Activated T-helper 2 cell treated with anti-CD3 and anti-CD28 coated beads, Interferon-gamma antibody, Interleukin-2, Interleukin-4, amounts not matched to agents 10 μg/mL and 5 μg/mL and 100 μg/mL, durations not matched to agents 14 hours and 24 hours and 36 hours (primary cell): ENCODE measurements at regions of chr16 and their contacts with region 1.

Region 1: GRCh38 chr16:75011634-75012307 is 12.9 kb downstream of the ZNRF1 start:
- DNase-seq: no peak
- H3K4me3 Mint-ChIP-seq: peak overlapping the region; percentile 66
- H3K27ac Mint-ChIP-seq: peak overlapping the region; percentile 95
- H3K4me1 Mint-ChIP-seq: peaks cover 42% of the 10 kb centered on the region
- H3K27me3 Mint-ChIP-seq: no peaks in the 10 kb centered on the region

Region 2: DNA sequence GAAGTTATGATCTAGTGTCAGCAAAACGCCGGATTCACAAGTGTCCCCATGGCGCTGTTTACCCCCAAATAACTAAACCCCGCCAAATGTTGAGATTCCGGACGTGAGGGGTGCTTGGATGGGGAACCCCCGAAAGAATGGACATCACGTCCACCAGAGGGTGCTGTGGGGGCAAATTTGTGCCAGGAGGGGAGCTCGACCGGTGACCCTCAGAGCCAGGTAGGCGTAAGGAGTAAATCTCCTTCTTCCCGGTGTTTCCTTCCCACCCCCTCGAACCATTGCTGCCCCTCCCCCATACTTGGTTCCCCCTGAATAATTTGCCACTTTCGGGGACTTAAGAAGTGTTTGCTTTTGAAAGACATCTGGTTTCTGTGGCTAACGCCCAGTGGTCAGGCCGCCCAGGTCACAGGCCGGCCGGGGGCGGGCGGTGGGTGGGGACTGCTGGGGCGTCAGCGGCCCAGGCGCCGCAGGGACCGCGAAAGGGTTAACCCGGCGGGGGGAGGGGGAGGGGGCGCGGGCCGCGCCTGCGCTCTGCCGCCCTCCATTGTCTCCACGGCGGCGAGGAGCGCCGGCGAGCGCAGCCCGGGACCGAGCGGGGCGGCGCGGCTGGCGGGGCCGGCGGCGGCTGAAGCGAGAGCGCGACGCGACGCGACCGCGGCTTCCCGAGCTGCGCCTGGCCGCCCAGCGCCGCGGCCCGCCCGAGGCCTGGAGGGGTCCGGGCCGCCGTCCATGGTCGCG is 13.1 kb before region 1 on chr16 and contains the start of gene ZNRF1:
- intact Hi-C with region 1: loop called (anchors 1 kb)
- DNase-seq: peak; percentile 67
- H3K4me3 Mint-ChIP-seq: peak within 1 kb of the TSS; percentile 86
- H3K27ac Mint-ChIP-seq: peak within 1 kb of the TSS; percentile 80
- H3K4me1 Mint-ChIP-seq: peaks cover 39% of the 10 kb centered on the region
- H3K27me3 Mint-ChIP-seq: peaks cover 16% of the 10 kb centered on the region
- total RNA-seq, gene ZNRF1: 34.8 and 36.6 TPM in 2 replicates

Region 3: GRCh38 chr16:75023009-75023408 is 11.2 kb after region 1 on chr16:
- intact Hi-C with region 1: loop called (anchors 1 kb)
- DNase-seq: no peak
- H3K4me3 Mint-ChIP-seq: no peak overlapping the region
- H3K27ac Mint-ChIP-seq: peak overlapping the region; percentile 84
- H3K4me1 Mint-ChIP-seq: peaks cover 23% of the 10 kb centered on the region
- H3K27me3 Mint-ChIP-seq: no peaks in the 10 kb centered on the region

Region 4: DNA sequence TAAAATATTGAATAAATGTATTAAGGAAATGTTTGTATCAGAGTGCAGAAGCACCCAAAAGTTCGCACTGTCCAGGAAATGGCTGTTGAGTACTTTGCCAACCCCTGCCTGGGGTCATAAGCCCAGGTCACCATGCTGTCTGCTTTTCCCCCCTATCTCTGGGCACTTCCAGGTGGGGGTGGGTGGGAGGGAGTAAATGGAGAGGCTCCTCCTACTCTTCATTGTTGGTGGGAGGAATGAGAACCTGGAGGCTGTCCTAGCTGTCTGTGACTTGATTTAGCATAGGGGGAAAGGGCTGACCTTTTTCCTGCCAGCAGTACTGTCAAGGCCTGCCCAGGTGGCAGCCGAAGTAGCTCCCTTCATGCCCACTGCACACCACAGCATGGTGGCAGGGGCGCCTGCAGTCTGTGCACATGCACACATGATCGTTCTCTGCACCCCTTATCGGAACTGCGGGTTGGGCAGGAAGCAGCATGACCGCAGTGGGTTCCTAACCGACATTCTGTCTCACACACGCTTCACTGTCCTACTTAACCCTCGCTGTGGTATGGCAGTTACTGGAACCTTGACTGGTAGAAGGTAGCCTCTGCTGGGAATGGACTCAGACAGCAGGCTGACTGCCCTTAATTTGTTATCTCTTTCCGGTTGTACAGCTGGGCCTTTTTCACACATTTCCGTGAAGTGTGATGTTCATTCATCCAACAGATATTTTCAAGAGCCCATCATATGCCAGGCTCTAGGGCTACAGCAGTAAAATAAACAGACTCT is 63.3 kb after region 1 on chr16:
- intact Hi-C with region 1: loop called (anchors 1 kb)
- DNase-seq: peak; percentile 84
- H3K4me3 Mint-ChIP-seq: peak overlapping the region; percentile 69
- H3K27ac Mint-ChIP-seq: peak overlapping the region; percentile 90
- H3K4me1 Mint-ChIP-seq: peaks cover 55% of the 10 kb centered on the region
- H3K27me3 Mint-ChIP-seq: no peaks in the 10 kb centered on the region

Region 5: DNA sequence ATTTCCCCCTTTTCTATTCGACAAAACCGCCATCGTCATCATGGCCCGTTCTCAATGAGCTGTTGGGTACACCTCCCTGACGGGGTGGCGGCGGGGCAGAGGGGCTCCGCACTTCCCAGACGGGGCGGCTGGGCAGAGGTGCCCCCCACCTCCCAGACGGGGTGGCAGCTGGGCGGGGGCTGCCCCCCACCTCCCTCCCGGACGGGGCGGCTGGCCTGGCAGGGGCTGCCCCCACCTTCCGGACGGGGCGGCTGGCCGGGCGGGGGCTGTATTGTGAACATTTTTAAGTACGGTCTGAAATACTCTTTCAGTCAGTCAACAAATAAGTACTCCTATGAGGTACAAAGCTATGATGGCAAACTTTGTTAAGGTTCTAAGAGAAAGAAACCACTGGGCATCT is 1488.2 kb after region 1 on chr16:
- intact Hi-C with region 1: no loop called
- DNase-seq: no peak
- H3K4me3 Mint-ChIP-seq: no peak overlapping the region
- H3K27ac Mint-ChIP-seq: no peak overlapping the region
- H3K4me1 Mint-ChIP-seq: no peaks in the 10 kb centered on the region
- H3K27me3 Mint-ChIP-seq: no peaks in the 10 kb centered on the region